Activated naive CD4-positive, alpha-beta T cell treated with anti-CD3 and anti-CD28 coated beads for 36 hours (primary cell): ENCODE measurements at regions of chr7 and their contacts with region 1.

Region 1: GRCh38 chr7:7719236-7719635 is 829 bp upstream of the RPA3 start:
- DNase-seq: peak; percentile 77
- H3K4me3 Mint-ChIP-seq: no peak overlapping the region
- H3K27ac Mint-ChIP-seq: peak overlapping the region; percentile 63
- H3K4me1 Mint-ChIP-seq: peaks cover 19% of the 10 kb centered on the region
- H3K27me3 Mint-ChIP-seq: no peaks in the 10 kb centered on the region

Region 2: GRCh38 chr7:7566651-7567611 is 152.3 kb before region 1 on chr7 and contains the start of gene MIOS:
- CTCF ChIA-PET with region 1: no interaction called
- intact Hi-C with region 1: loop called (anchors 1 kb)
- DNase-seq: peak; percentile 76
- H3K4me3 Mint-ChIP-seq: peak within 1 kb of the TSS; percentile 80
- H3K27ac Mint-ChIP-seq: peak within 1 kb of the TSS; percentile 63
- H3K4me1 Mint-ChIP-seq: peaks cover 30% of the 10 kb centered on the region
- H3K27me3 Mint-ChIP-seq: no peaks in the 10 kb centered on the region
- total RNA-seq, gene MIOS: 40.6 to 43.0 TPM

Region 3: GRCh38 chr7:7672545-7673239 is 46.5 kb before region 1 on chr7:
- CTCF ChIA-PET with region 1: no interaction called
- intact Hi-C with region 1: loop called (anchors 1 kb)
- DNase-seq: peak; percentile 64
- H3K4me3 Mint-ChIP-seq: peak overlapping the region; percentile 31
- H3K27ac Mint-ChIP-seq: peak overlapping the region; percentile 79
- H3K4me1 Mint-ChIP-seq: peaks cover 45% of the 10 kb centered on the region
- H3K27me3 Mint-ChIP-seq: no peaks in the 10 kb centered on the region

Region 4: GRCh38 chr7:7706101-7706511 is 13.1 kb before region 1 on chr7:
- CTCF ChIA-PET with region 1: no interaction called
- intact Hi-C with region 1: loop called (anchors 1 kb)
- DNase-seq: no peak
- H3K4me3 Mint-ChIP-seq: no peak overlapping the region
- H3K27ac Mint-ChIP-seq: no peak overlapping the region
- H3K4me1 Mint-ChIP-seq: peaks cover 24% of the 10 kb centered on the region
- H3K27me3 Mint-ChIP-seq: no peaks in the 10 kb centered on the region

Region 5: GRCh38 chr7:7795203-7796135 is 76.2 kb after region 1 on chr7:
- CTCF ChIA-PET with region 1: no interaction called
- intact Hi-C with region 1: no loop called
- DNase-seq: no peak
- H3K4me3 Mint-ChIP-seq: no peak overlapping the region
- H3K27ac Mint-ChIP-seq: no peak overlapping the region
- H3K4me1 Mint-ChIP-seq: no peaks in the 10 kb centered on the region
- H3K27me3 Mint-ChIP-seq: no peaks in the 10 kb centered on the region

Region 6: DNA sequence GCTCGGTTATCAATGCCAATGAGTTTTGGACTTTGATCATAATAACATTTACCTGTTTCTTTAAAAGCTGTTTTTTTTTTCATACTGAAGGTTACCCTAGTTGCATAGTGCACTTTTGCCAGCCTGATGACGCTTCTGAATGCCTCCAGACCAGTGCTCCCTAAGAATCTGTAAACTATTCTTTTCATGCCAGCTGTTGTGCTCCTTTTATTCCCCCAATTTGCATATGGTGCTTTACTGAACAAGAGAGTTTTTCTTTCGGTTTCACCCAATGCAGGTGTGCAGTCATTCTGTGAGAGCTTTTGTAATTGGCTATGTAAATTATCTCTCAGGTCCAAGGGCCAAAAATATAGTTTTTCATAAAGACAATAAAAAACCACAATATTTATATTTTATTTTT is 201.2 kb after region 1 on chr7:
- CTCF ChIA-PET with region 1: no interaction called
- intact Hi-C with region 1: loop called (anchors 1 kb)
- DNase-seq: peak; percentile 46
- H3K4me3 Mint-ChIP-seq: no peak overlapping the region
- H3K27ac Mint-ChIP-seq: no peak overlapping the region
- H3K4me1 Mint-ChIP-seq: peaks cover 24% of the 10 kb centered on the region
- H3K27me3 Mint-ChIP-seq: no peaks in the 10 kb centered on the region

Region 7: GRCh38 chr7:8134089-8134733 is 415.0 kb after region 1 on chr7:
- CTCF ChIA-PET with region 1: no interaction called
- intact Hi-C with region 1: loop called (anchors 1 kb)
- DNase-seq: peak; percentile 71
- H3K4me3 Mint-ChIP-seq: peak overlapping the region; percentile 33
- H3K27ac Mint-ChIP-seq: peak overlapping the region; percentile 68
- H3K4me1 Mint-ChIP-seq: peaks cover 52% of the 10 kb centered on the region
- H3K27me3 Mint-ChIP-seq: no peaks in the 10 kb centered on the region